Heart right ventricle (tissue), 16 donors: ENCODE measurements at regions of chrX and their contacts with region 1.

Region 1: DNA sequence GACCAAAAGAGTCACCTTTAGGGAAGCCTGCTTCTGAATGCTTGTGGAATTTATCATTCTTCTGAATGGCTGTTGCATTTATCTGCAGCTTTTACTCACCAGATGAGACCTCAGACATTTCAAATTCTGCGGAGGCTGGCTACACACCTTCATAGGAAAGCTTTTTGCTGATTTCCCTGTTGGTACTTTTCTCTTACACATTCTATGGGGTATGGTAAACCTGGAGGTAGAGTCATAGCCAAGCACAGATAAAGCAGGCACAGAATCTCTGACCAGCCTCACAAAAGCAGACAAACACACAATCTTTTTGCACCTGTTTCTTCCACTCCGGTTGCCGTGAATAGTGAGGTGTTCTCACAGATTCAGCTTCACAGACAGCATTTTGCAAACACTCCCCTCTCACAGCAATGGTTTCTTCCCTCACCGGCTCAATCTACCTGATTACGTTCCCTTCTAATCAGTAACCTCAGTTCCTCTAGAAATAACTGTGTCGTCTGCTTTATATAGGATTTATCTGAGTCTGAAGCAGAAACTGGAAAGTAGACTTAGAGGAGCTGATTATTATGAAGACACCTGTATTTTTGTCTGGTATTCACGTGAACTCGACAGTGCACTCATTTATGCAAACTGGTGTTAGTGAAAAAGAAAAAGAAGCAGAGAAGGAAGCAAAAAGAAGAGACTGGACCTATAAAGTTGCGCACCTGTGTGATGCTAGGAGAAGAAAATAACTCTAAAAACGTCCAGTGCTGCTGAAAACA is 83.1 kb downstream of the DMD start:
- DNase-seq: no peak
- ATAC-seq: no peak
- H3K4me3 ChIP-seq: no peak overlapping the region
- H3K27ac ChIP-seq: no peak overlapping the region
- H3K4me1 ChIP-seq: peaks cover 0 to 9% (median 0%) of the 10 kb centered on the region in 9 donors
- H3K27me3 ChIP-seq: peaks cover 0 to 4% (median 0%) of the 10 kb centered on the region in 7 donors
- CTCF ChIP-seq: no peak

Region 2: GRCh38 chrX:33204889-33205288 is 76.7 kb after region 1 on chrX:
- intact Hi-C with region 1: loop called in 2 of 10 experiments (anchors 5 to 10 kb)
- DNase-seq: peak in 1 of 2 donors; percentile 9
- ATAC-seq: peak in 6 of 8 donors; percentile 63 to 84 (median 75)
- H3K4me3 ChIP-seq: peak overlapping the region in 9 of 10 donors; percentile 13 to 59 (median 42)
- H3K27ac ChIP-seq: peak overlapping the region in 7 of 10 donors; percentile 23 to 88 (median 72)
- H3K4me1 ChIP-seq: peaks cover 0 to 3% (median 0%) of the 10 kb centered on the region in 9 donors
- H3K27me3 ChIP-seq: no peaks in the 10 kb centered on the region
- CTCF ChIP-seq: no peak